GM13976 (cell line): ENCODE measurements at regions of chr1 and their contacts with region 1.

Region 1: DNA sequence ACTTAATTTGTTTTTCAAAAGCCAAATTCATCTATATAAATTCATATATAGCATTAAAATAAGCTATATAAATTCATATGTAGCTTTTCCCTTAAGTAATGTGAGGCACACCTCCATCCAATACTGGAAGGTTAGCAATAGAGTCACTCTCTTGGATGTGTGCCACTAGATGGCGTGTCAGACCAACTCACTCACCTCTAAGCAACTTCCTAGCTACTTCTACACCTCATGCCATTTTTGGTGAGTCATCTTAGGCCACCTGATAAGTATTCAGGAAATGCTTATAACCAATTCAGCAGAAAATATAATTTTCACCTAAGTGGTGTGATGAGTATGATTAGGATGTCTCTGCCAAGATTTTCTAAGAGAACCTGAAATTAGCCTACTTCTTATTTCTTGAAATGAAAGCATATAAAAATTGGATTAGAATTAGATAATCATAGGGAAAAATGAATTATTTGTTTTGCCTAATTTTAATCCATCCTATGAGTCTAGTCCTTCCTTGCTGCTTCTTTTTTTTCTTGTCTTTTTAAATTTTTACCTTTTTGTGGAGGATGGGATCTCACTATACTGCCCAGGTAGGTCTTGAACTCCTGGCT is 34.4 kb upstream of the TADA1 start:
- DNase-seq: peak; percentile 77
- CTCF ChIP-seq: peak; percentile 75

Region 2: GRCh38 chr1:166721145-166721544 is 189.3 kb before region 1 on chr1:
- in situ Hi-C with region 1: no loop called
- DNase-seq: no peak
- CTCF ChIP-seq: no peak

Region 3: GRCh38 chr1:167059045-167059808 is 148.7 kb after region 1 on chr1:
- in situ Hi-C with region 1: loop called (anchors 5 kb)
- DNase-seq: peak; percentile 70
- CTCF ChIP-seq: peak; percentile 82

Region 4: DNA sequence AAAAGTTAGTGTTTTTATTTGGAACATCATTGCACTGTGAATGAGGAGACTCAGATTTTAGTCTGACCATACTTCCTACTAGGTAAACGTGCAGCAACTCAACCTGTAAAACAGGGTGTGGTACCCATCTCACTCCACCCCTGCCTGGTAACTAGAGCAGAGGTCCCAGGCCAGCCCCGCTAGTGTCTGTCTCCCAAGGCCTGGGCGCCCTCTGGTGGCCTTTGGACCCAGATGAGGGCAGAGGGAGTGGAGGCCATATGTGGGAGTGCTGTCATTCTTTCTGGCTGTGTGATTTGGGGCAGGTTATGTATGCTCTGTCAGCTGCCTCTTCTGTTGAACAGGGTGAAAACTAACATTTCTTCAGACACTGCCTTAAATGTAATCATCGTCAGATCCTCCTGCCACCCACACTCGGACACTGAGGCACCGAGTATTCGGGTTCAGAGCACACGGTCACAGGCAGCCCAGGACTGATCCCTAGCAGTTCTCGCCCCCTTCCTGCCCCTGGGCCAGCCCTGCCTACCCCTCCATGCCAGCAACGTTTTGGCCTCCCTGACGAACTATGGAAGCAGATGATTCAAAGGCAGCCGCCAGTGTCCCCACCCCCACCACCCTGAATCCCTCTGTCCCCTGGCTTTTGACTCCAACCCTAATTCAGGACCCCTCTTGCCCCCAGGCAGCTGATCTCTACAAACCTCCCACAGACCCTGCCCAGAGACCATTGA is 531.8 kb after region 1 on chr1:
- in situ Hi-C with region 1: loop called (anchors 25 kb)
- DNase-seq: peak; percentile 89
- CTCF ChIP-seq: peak; percentile 80

Region 5: GRCh38 chr1:167533851-167534300 is 623.4 kb after region 1 on chr1:
- in situ Hi-C with region 1: loop called (anchors 25 kb)
- DNase-seq: peak; percentile 80
- CTCF ChIP-seq: peak; percentile 68